Breast epithelium (tissue), 4 donors: ENCODE measurements at regions of chr11 and their contacts with region 1.

Region 1: DNA sequence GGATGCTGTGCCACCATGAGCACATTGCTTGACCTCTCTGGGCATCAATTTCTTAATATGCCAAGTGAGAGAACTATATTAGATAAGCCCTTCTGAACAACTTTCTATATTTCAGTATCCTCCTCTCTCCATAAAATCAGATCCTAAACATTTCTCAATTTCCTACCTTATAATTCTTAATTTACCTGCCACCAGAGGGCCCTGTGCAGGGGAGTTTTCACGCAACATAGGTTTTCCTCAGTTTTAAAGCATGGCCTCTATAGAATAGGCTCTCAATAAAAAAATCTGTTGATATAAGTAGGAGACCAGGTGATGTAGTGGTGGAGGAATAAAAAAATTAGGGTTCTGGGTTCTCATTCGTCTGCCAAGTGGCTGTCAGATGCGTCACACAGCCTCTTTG is 83.7 kb upstream of the DBX1 start:
- DNase-seq: no peak
- H3K4me3 ChIP-seq: no peak overlapping the region
- H3K27ac ChIP-seq: no peak overlapping the region
- H3K4me1 ChIP-seq: no peaks in the 10 kb centered on the region
- H3K27me3 ChIP-seq: no peaks in the 10 kb centered on the region
- CTCF ChIP-seq: no peak
- POLR2A ChIP-seq: no peak

Region 2: GRCh38 chr11:20261526-20261925 is 17.6 kb after region 1 on chr11:
- intact Hi-C with region 1: loop called (anchors 1 kb)
- DNase-seq: no peak
- H3K4me3 ChIP-seq: no peak overlapping the region
- H3K27ac ChIP-seq: no peak overlapping the region
- H3K4me1 ChIP-seq: no peaks in the 10 kb centered on the region
- H3K27me3 ChIP-seq: peaks cover 0 to 6% of the 10 kb centered on the region in 2 donors
- CTCF ChIP-seq: no peak
- POLR2A ChIP-seq: no peak